ENCODE measurements at regions of chr1 and their contacts with region 1.

Region 1: DNA sequence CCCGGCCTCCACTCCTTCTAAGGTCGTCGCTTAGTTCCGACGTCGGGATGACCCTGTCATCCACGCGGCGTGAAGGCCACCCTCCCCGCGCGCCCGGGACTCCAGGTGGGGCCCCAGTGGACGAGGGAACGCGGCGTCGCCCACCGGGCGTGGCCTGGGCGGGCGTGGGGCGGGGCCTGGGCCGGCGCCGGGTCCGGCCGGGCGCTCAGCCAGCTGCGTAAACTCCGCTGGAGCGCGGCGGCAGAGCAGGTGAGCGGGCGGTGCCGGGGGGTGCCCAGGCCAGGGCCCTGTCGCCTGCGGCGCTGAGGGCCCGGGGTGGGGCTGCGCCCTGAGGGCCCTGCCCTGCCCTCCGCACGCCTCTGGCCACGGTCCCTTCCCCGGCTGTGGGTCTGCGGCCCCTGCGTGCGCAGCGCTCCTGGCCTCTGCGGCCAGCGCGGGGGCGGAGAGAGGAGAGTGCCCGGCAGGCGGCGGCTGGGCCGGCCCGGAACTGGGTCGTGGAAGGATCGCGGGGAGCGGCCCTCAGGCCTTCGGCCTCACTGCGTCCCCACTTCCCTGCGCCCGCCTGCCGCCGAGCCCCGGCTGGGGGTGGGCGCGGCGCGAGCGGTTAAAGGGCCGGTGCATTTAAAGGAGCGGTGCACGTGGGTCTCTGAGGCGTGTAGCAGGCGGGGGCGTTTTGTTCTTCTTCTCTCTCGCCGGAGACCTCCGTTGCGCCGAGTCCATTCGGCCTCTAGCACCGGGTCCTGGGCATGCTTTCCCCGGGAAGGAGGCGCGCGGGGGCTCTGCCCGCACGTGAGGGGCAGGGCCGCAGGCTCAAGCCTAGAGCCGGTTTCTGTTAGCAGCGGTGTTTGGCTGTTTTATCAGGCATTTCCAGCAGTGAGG is at the start of gene PSEN2:
- DNase-seq: peak; percentile 92
- ATAC-seq: peak; percentile 74
- H3K4me3 ChIP-seq: peak within 1 kb of the TSS; percentile 81
- H3K27ac ChIP-seq: peak within 1 kb of the TSS; percentile 13
- H3K4me1 ChIP-seq: peaks cover 49% of the 10 kb centered on the region
- H3K27me3 ChIP-seq: no peaks in the 10 kb centered on the region
- CTCF ChIP-seq: peak; percentile 33; the same call in 1 of the 2 replicates
- total RNA-seq, gene PSEN2: 85.3 and 103 TPM in 2 replicates

Region 2: DNA sequence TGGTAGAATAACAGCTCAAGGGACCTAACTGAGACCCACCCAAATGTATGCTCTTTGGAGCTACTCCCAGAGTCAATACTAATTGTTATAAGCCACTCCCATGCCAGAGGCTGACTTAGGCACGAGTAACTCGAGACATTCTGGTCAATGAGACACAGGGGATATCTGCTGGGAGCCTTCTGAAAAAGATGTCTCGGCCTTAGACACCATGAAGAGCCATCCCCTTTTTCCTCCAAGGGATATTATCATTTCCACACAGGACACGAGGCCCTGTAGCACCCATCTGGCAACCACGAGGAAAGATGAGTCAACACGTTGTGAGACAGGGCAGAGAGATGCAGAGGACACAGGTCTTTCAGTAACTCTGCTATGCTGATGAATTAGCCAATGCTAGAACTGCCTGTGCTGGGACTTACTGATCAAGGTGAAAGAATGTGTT is 162.3 kb before region 1 on chr1:
- CTCF ChIA-PET with region 1: no interaction called
- POLR2A ChIA-PET with region 1: no interaction called
- intact Hi-C with region 1: no loop called
- DNase-seq: peak; percentile 63
- ATAC-seq: peak; percentile 75
- H3K4me3 ChIP-seq: no peak overlapping the region
- H3K27ac ChIP-seq: 0 out of 2 replicates have a peak overlapping the region, but pooled peaks have one; percentile 1
- H3K4me1 ChIP-seq: peaks cover 26% of the 10 kb centered on the region
- H3K27me3 ChIP-seq: no peaks in the 10 kb centered on the region
- CTCF ChIP-seq: no peak

Region 3: DNA sequence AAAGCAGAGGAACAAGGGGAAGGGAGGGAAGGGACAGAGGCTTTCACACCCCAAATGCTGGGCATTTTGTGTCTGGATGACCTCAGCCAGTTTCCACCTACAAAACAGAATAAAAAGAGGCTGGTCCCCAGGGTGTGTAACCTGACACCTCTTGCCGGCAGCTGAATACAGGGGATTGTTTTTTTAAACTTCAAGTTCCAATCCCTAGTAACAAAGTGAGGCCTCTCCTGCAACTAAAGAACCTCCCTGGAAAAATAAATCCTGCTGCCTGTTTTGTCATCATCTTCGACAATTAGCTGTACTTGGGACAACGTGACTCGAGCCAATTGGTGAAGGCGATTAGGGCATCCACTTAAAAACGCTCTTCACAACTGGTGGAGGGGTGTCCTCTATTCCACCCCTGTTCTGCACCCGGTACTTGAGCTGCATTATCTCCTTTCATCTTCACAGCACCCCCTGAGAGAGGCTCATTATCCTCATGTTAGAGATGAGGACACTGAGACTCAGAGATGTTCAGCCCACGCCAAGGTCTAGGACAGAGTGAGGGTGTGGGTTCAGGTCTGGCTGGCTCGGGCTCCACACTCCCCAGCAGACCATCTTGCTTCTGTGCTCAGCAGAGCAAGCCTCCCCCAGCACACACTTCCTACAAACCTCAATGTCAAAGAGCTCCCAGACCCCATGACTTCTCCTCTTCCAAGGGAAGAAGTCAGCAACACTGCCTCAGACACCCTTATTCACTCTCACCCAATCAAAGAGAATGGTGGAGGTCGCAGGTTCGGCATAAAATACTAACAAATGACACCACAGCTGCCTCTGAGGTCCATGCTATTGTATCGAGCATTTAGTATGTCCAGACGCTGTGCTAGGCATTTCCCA is 146.7 kb before region 1 on chr1:
- CTCF ChIA-PET with region 1: no interaction called
- POLR2A ChIA-PET with region 1: no interaction called
- intact Hi-C with region 1: no loop called
- DNase-seq: peak; percentile 56
- ATAC-seq: peak; percentile 92
- H3K4me3 ChIP-seq: no peak overlapping the region
- H3K27ac ChIP-seq: no peak overlapping the region
- H3K4me1 ChIP-seq: peaks cover 11% of the 10 kb centered on the region
- H3K27me3 ChIP-seq: no peaks in the 10 kb centered on the region
- CTCF ChIP-seq: no peak

Region 4: GRCh38 chr1:226778657-226779058 is 92.0 kb before region 1 on chr1:
- CTCF ChIA-PET with region 1: no interaction called
- POLR2A ChIA-PET with region 1: no interaction called
- intact Hi-C with region 1: no loop called
- DNase-seq: peak; percentile 99
- ATAC-seq: peak; percentile 93
- H3K4me3 ChIP-seq: no peak overlapping the region
- H3K27ac ChIP-seq: peak overlapping the region; percentile 69
- H3K4me1 ChIP-seq: peaks cover 23% of the 10 kb centered on the region
- H3K27me3 ChIP-seq: no peaks in the 10 kb centered on the region
- CTCF ChIP-seq: no peak

Region 5: DNA sequence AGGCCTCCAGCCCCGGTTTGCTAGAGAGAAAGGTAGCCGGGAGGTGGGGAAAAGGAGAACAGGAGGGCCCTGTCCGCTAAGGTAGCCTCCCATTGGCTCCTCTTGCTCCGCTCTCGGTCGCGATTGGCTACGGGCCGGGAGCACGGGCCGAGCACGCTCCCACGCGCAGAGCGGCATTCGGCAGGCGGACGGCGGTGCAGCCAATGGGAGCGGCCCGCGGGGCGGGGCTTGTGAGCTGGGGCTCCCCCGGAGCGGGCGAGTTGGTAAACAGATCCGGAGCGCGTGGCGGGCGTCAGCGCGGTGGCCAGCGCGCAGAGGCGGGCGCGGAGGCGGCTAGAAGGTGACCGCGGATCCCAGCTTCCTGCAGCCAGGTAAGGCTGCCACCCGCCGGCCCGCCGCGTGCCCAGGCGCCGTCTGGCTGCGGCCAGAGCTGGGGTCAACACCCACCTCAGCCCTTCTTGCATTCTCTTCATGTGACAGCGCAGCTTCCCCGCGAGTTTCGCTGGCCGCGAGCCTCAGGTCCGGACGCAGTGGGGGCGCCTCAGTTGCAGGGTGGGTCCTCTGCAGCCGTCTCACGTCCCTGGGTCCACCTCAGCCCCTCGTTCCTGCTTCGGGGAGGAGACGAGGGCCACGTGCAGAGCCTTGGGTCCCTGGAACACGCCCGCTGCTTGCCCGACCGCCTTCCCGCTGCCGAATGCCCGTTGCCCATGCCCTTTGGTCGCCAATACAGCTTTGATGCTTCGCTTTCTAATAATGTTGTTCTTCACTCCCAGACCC is 69.6 kb after region 1 on chr1 and contains the start of gene COQ8A:
- CTCF ChIA-PET with region 1: interaction called, 3 read pairs
- POLR2A ChIA-PET with region 1: interaction called, 13 read pairs
- intact Hi-C with region 1: loop called (anchors 2 kb)
- DNase-seq: peak; percentile 100
- ATAC-seq: peak; percentile 94
- H3K4me3 ChIP-seq: peak within 1 kb of the TSS; percentile 79
- H3K27ac ChIP-seq: peak within 1 kb of the TSS; percentile 87
- H3K4me1 ChIP-seq: peaks cover 27% of the 10 kb centered on the region
- H3K27me3 ChIP-seq: no peaks in the 10 kb centered on the region
- CTCF ChIP-seq: no peak
- total RNA-seq, gene COQ8A: 67.0 and 73.3 TPM in 2 replicates

Region 6: GRCh38 chr1:227351443-227351842 is 480.8 kb after region 1 on chr1:
- CTCF ChIA-PET with region 1: no interaction called
- POLR2A ChIA-PET with region 1: no interaction called
- intact Hi-C with region 1: loop called (anchors 5 kb)
- DNase-seq: peak; percentile 93
- ATAC-seq: peak; percentile 93
- H3K4me3 ChIP-seq: no peak overlapping the region
- H3K27ac ChIP-seq: no peak overlapping the region
- H3K4me1 ChIP-seq: peaks cover 19% of the 10 kb centered on the region
- H3K27me3 ChIP-seq: no peaks in the 10 kb centered on the region
- CTCF ChIP-seq: no peak

Measured in PC-3 (cell line).